Heart right ventricle (tissue), 16 donors: ENCODE measurements at regions of chr6 and their contacts with region 1.

Region 1: DNA sequence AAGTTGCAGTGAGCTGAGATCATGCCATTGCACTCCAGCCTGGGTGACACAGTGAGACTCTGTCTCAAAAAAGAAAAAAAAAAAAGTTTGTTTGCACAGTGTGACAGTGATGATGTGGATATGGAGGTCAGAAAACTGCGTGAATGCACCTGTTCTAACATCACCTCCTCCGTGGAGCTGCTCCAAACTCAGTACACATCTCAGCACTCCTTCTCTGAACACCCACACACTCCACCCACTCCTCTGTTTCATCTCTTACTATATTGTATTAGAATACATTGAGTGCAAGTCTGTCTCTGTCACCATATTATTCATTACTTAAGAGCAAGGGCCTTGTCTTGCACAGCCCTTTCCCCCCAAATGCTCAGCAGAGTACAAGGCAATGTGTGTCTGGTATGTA is 51.5 kb upstream of the ENPP4 start:
- DNase-seq: no peak
- ATAC-seq: no peak
- H3K4me3 ChIP-seq: no peak overlapping the region
- H3K27ac ChIP-seq: no peak overlapping the region
- H3K4me1 ChIP-seq: no peaks in the 10 kb centered on the region
- H3K27me3 ChIP-seq: no peaks in the 10 kb centered on the region
- CTCF ChIP-seq: no peak

Region 2: DNA sequence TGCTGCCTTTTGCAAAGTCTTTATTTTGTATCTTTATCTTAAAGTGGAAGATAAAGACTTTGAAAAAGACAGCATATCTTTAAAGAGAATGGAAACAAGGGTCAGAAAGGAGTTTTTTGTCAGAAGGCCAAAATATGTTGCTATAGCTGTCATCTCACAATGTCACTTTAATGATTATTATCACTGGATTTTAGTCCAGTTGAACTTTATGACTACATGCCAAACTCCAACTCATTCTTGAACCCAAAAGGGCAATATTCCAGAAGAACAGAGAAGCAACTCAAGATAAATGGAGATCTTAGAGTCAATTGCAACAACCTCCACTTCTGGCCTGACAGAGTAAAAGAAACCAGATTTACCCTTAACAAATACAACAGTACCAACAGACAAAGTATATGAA is 15.3 kb before region 1 on chr6:
- intact Hi-C with region 1: loop called in 1 of 10 experiments (anchors 1 kb)
- DNase-seq: no peak
- ATAC-seq: no peak
- H3K4me3 ChIP-seq: no peak overlapping the region
- H3K27ac ChIP-seq: no peak overlapping the region
- H3K4me1 ChIP-seq: peaks cover 0 to 8% (median 0%) of the 10 kb centered on the region in 9 donors
- H3K27me3 ChIP-seq: no peaks in the 10 kb centered on the region
- CTCF ChIP-seq: no peak